GM18951 (cell line): ENCODE measurements at regions of chr15 and their contacts with region 1.

Region 1: DNA sequence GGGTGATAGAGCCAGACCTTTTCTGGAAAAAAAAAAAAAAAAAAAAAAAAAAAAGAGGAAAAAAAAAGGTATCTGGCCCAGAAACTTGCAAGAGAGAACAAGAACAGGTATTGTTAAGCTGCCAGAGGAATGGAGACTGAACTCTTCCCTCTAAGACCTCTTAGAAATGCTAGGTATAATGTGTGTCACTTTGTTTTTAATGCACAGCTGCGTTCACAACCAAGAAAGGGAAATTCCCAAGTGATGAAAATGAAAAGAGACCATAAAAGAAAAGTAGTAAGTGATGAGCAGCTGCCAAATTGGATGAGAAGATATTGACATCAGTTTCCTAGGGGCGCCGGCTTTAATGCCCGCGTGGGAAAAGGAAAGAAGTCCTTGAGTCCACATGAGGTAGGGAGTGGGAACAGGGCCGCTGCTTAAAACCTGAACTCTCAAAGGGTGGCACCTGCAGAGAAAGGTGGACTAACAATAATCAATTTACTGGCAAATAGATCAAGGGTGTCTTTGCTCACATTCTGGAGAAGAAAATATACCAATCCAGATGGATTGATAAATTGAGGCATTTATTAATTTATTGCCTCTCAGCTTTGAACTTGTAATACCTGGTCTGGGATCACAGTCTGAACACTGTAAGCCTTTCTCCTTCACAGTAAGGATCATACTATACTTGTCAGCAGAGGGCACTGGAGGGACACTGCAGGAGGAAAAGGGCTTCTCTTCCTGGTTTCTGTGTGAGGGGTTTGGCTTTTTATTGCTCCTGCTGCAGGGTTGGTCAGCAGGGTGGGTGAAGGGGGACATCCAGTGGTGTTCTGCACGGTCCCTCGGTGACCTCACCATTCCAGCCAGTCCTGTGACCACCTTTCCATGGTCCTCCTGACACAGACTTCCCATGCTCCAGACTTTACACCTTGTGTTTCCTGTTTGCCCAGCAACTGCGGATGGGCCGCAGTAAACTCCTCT is 131.6 kb downstream of the AQP9 start:
- POLR2A ChIP-seq: no peak

Region 2: DNA sequence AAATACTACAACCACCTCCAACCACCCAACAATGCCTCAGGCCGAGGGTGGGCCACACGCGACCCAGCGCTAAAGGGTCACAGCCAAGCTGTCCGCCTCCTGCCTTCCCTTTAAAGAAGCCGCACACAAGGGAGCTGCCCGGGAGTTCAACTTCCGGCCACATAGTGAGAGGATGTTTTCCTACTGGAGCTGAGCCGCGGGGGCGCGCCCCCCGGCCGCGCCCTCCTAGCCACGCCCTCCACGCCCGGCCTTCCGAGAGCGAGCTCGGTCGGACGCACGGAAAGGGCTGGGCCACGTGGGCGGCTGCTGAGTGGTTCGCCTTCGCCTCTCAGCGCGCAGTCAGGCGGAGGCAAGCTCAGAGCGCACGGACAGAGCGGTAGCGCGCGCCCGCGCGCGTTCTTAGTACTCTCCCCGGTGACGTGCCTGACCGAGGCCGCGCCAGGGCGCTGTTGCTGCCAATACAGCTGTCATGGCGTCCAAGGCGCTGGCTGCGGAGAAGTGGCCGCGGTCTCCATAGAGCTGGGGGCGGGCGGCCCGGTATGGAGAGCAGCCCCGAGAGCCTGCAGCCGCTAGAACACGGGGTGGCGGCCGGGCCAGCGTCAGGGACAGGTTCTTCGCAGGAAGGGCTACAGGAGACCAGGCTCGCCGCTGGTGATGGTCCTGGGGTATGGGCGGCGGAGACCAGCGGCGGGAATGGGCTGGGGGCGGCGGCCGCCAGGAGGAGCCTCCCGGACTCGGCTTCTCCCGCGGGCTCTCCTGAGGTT is 501.3 kb after region 1 on chr15 and contains the start of gene MINDY2:
- in situ Hi-C with region 1: loop called (anchors 25 kb)
- POLR2A ChIP-seq: peak; percentile 92